K562 (cell line): ENCODE measurements at regions of chr6 and their contacts with region 1.

Region 1: GRCh38 chr6:35496841-35497570 is at the start of gene TEAD3:
- DNase-seq: peak; percentile 82 to 98 (median 98)
- ATAC-seq: peak; percentile 66
- H3K4me3 ChIP-seq: peak within 1 kb of the TSS; percentile 69
- H3K27ac ChIP-seq: peak within 1 kb of the TSS; percentile 95
- H3K4me1 ChIP-seq: peaks cover 34 to 53% of the 10 kb centered on the region in 2 experiments
- H3K27me3 ChIP-seq: no peaks in the 10 kb centered on the region
- CTCF ChIP-seq: peak in 2 of 3 experiments; percentile 30 to 49; a peak in 3 of 6 replicates
- EP300 ChIP-seq: no peak
- POLR2A ChIP-seq: no peak
- RAD21 ChIP-seq: no peak
- polyA plus RNA-seq, gene TEAD3: 0.63 to 0.92 TPM

Region 2: GRCh38 chr6:35435074-35435837 is 61.8 kb before region 1 on chr6:
- CTCF ChIA-PET with region 1: no interaction called
- POLR2A ChIA-PET with region 1: no interaction called
- in situ Hi-C with region 1: no loop called
- intact Hi-C with region 1: no loop called
- DNase-seq: no peak
- ATAC-seq: peak; percentile 7; the same call in 2 of the 3 replicates
- H3K4me3 ChIP-seq: no peak overlapping the region
- H3K27ac ChIP-seq: no peak overlapping the region
- H3K4me1 ChIP-seq: peaks cover 5 to 13% of the 10 kb centered on the region in 2 experiments; a peak in 4 of 5 replicates
- H3K27me3 ChIP-seq: peaks cover 0 to 3% of the 10 kb centered on the region in 2 experiments; a peak in 1 of 5 replicates
- CTCF ChIP-seq: no peak
- EP300 ChIP-seq: no peak
- POLR2A ChIP-seq: no peak
- RAD21 ChIP-seq: no peak

Region 3: DNA sequence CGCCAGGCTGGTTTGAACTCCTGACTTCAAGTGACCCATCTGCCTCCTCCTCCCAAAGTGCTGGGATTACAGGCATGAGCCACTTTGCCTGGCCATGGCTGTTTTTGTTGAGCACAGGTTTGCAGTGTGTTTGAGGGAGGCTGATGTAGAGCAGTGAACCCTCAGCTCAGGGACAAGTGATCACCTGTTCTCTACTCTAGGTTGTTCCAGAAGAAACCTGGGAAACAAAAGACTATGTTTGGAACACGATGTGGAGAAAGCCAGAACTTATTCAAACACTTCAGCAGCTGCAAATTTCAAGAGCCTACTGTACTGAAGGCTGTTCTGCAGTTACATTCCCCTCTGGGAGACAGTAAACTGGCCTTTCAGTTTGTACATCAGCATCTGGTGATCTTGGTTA is 11.0 kb after region 1 on chr6:
- CTCF ChIA-PET with region 1: no interaction called
- POLR2A ChIA-PET with region 1: interaction called, 20 read pairs
- in situ Hi-C with region 1: no loop called
- intact Hi-C with region 1: no loop called
- DNase-seq: no peak
- ATAC-seq: no peak
- H3K4me3 ChIP-seq: no peak overlapping the region
- H3K27ac ChIP-seq: no peak overlapping the region
- H3K4me1 ChIP-seq: peaks cover 0 to 16% of the 10 kb centered on the region in 2 experiments; a peak in 2 of 5 replicates
- H3K27me3 ChIP-seq: peaks cover 47 to 73% of the 10 kb centered on the region in 2 experiments
- CTCF ChIP-seq: no peak
- EP300 ChIP-seq: no peak
- POLR2A ChIP-seq: no peak
- RAD21 ChIP-seq: no peak

Region 4: DNA sequence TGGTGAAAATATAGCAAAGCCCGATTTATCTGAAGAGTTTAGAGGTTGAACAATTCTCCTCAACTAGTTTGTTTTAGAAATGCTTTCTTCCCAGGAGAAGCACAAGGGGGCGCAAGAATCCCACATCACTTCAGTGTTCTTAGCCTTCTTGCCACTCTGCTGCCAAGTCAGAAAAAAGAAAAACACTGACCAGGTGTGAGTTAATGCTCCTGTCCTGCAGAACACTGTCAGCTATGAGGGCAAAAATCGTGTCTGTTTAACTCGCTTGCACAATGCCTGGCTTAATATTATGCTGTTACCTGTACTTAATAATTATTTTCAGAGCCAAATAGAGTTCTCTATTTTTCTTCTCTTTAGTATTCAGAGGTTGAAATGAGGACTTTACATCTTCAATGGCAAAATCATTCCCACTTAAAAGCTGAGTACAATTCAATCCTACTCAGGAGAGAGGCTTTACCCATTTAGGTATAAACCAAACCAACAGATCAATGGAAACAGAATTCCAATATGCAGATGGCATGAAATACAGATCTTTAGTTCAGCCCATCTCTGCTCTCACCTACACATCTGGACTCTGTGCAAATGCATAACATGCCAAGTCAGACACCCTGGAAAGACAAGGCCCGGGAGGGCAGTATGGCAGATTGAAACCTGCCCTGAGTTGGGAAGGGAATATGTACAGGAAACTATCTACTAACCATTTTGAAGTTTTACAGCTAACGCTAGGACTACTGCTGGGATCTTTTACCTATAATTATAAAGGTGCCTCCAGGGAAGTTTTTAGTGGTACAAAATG is 87.1 kb after region 1 on chr6:
- CTCF ChIA-PET with region 1: no interaction called
- POLR2A ChIA-PET with region 1: no interaction called
- in situ Hi-C with region 1: no loop called
- intact Hi-C with region 1: no loop called
- DNase-seq: peak; percentile 39 to 81 (median 46)
- ATAC-seq: peak; percentile 92
- H3K4me3 ChIP-seq: no peak overlapping the region
- H3K27ac ChIP-seq: no peak overlapping the region
- H3K4me1 ChIP-seq: no peaks in the 10 kb centered on the region
- H3K27me3 ChIP-seq: no peaks in the 10 kb centered on the region
- CTCF ChIP-seq: peak; percentile 83 to 93 (median 85)
- EP300 ChIP-seq: no peak
- POLR2A ChIP-seq: no peak
- RAD21 ChIP-seq: peak; percentile 97 to 98